Ascending aorta (tissue), 2 donors: ENCODE measurements at regions of chr16 and their contacts with region 1.

Region 1: GRCh38 chr16:55480228-55480661 is 1.2 kb downstream of the MMP2 start:
- DNase-seq: peak; percentile 60 to 91
- H3K4me3 ChIP-seq: peak overlapping the region; percentile 83 to 84
- H3K27ac ChIP-seq: peak overlapping the region; percentile 74 to 90
- H3K4me1 ChIP-seq: peaks cover 0 to 8% of the 10 kb centered on the region in 2 donors
- H3K27me3 ChIP-seq: no peaks in the 10 kb centered on the region
- CTCF ChIP-seq: no peak

Region 2: GRCh38 chr16:55418585-55418984 is 61.7 kb before region 1 on chr16:
- intact Hi-C with region 1: no loop called
- DNase-seq: no peak
- H3K4me3 ChIP-seq: no peak overlapping the region
- H3K27ac ChIP-seq: no peak overlapping the region
- H3K4me1 ChIP-seq: no peaks in the 10 kb centered on the region
- H3K27me3 ChIP-seq: no peaks in the 10 kb centered on the region
- CTCF ChIP-seq: no peak

Region 3: GRCh38 chr16:55494994-55495421 is 14.8 kb after region 1 on chr16:
- intact Hi-C with region 1: no loop called
- DNase-seq: peak in 1 of 2 donors; percentile 72
- H3K4me3 ChIP-seq: no peak overlapping the region
- H3K27ac ChIP-seq: no peak overlapping the region
- H3K4me1 ChIP-seq: peaks cover 0 to 5% of the 10 kb centered on the region in 2 donors
- H3K27me3 ChIP-seq: no peaks in the 10 kb centered on the region
- CTCF ChIP-seq: peak in 1 of 3 experiments; percentile 41

Region 4: GRCh38 chr16:55508941-55509931 is 29.0 kb after region 1 on chr16 and contains the start of gene LPCAT2:
- intact Hi-C with region 1: loop called (anchors 2 kb)
- DNase-seq: peak in 1 of 2 donors; percentile 92
- H3K4me3 ChIP-seq: peak within 1 kb of the TSS; percentile 65 to 78
- H3K27ac ChIP-seq: peak within 1 kb of the TSS; percentile 44 to 61
- H3K4me1 ChIP-seq: no peaks in the 10 kb centered on the region
- H3K27me3 ChIP-seq: no peaks in the 10 kb centered on the region
- CTCF ChIP-seq: no peak
- total RNA-seq, gene LPCAT2: 44.2 TPM